K562 (cell line): ENCODE measurements at regions of chr4 and their contacts with region 1.

Region 1: GRCh38 chr4:150209140-150209829 is 131.0 kb downstream of the DCLK2 start:
- DNase-seq: peak; percentile 51 to 59 (median 57)
- ATAC-seq: peak; percentile 97
- H3K4me3 ChIP-seq: no peak overlapping the region
- H3K27ac ChIP-seq: no peak overlapping the region
- H3K4me1 ChIP-seq: no peaks in the 10 kb centered on the region
- H3K27me3 ChIP-seq: peaks cover 0 to 6% of the 10 kb centered on the region in 2 experiments; a peak in 2 of 5 replicates
- CTCF ChIP-seq: peak; percentile 65 to 71 (median 70)
- EP300 ChIP-seq: no peak
- POLR2A ChIP-seq: no peak
- RAD21 ChIP-seq: peak; percentile 25 to 66

Region 2: DNA sequence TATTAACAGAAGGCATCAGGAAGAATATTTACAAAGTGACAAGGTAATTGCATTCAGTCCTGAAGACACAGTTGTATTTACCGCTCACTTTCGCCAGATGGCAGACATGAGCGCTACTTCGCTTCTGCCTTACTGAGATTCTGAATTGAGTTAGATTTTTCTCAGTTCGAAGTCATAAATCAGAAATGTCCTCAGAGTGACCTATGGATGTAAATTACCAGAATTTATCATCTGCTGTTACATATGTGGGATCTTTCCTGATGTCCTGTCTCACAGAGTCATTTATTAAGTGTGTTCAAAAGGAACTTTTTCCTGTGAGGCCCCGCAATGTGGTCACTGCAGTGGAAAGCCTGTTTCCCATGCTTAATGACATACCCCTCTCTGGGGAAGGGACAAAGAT is 228.3 kb before region 1 on chr4:
- CTCF ChIA-PET with region 1: interaction called, 14 read pairs
- POLR2A ChIA-PET with region 1: no interaction called
- in situ Hi-C with region 1: loop called (anchors 25 kb)
- intact Hi-C with region 1: loop called (anchors 1 kb)
- DNase-seq: peak; percentile 36 to 61 (median 44)
- ATAC-seq: peak; percentile 84
- H3K4me3 ChIP-seq: no peak overlapping the region
- H3K27ac ChIP-seq: no peak overlapping the region
- H3K4me1 ChIP-seq: no peaks in the 10 kb centered on the region; a peak in 1 of 5 replicates
- H3K27me3 ChIP-seq: no peaks in the 10 kb centered on the region
- CTCF ChIP-seq: peak; percentile 62 to 75 (median 67); a peak in 5 of 6 replicates
- EP300 ChIP-seq: no peak
- POLR2A ChIP-seq: no peak
- RAD21 ChIP-seq: peak; percentile 58 to 67

Region 3: DNA sequence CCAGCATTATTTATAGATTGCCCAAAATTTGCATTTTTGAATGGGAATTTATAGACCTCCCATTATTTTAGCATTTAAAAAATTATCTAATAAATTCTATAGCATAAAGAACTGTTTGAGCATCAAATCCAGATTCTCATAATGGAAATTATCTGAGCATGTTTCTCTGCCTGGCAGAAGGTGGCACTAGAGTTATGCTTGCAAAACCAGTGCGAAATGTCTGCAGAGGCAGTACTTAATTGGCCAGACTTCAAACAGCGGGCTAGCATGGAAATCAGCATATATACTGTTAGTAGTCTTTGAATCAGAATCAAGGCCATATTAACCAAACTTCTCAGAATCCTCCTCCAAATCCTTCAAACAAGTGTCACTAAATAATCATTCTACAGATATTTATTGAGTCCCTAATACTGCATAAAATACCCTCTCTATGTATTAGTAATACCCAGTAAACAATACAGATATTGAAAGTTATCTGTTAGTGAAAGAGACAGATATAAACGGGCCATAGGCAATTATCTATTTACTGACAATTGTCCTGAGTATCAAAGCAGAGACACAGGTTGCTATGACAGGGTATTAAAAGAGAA is 209.7 kb before region 1 on chr4:
- CTCF ChIA-PET with region 1: interaction called, 3 read pairs
- POLR2A ChIA-PET with region 1: no interaction called
- in situ Hi-C with region 1: loop called (anchors 25 kb)
- intact Hi-C with region 1: loop called (anchors 1 kb)
- DNase-seq: peak in 2 of 4 experiments; percentile 10 to 17
- ATAC-seq: peak; percentile 54; the same call in 1 of the 3 replicates
- H3K4me3 ChIP-seq: no peak overlapping the region
- H3K27ac ChIP-seq: no peak overlapping the region
- H3K4me1 ChIP-seq: peaks cover 0 to 8% of the 10 kb centered on the region in 2 experiments; a peak in 1 of 5 replicates
- H3K27me3 ChIP-seq: no peaks in the 10 kb centered on the region
- CTCF ChIP-seq: peak; percentile 40 to 59 (median 47)
- EP300 ChIP-seq: no peak
- POLR2A ChIP-seq: no peak
- RAD21 ChIP-seq: peak in 1 of 2 experiments; percentile 48; a peak in 2 of 4 replicates

Region 4: DNA sequence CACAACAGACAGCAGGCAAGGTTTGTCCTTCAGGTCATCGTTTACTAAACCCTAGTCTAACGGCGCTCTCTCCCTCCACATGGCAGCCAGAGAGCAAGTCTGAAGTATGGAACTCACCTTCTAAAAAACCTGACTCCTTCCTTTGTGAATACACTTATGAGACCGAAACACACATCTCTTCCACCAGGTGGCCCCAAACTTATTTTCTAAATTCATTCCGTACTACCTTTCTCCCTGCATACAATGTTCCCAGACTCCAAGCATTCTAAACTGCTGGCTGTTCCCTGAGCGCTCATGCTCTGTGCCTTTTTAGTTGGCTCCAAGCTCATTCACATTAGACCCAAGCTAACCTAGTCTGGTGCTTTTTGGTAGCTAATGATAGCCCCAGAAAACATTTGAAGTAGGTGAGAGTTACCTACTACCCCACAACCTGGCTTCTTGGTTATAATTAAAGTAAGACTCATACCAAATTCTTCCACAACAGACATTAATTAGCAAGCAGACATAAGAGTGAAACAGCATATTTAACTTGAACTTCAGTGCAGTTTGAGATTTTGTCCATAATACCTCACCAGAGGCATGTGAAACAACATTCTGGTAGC is 198.7 kb before region 1 on chr4:
- CTCF ChIA-PET with region 1: no interaction called
- POLR2A ChIA-PET with region 1: no interaction called
- in situ Hi-C with region 1: no loop called
- intact Hi-C with region 1: loop called (anchors 5 kb)
- DNase-seq: peak; percentile 12 to 41 (median 18)
- ATAC-seq: peak; percentile 87
- H3K4me3 ChIP-seq: no peak overlapping the region
- H3K27ac ChIP-seq: no peak overlapping the region
- H3K4me1 ChIP-seq: no peaks in the 10 kb centered on the region
- H3K27me3 ChIP-seq: no peaks in the 10 kb centered on the region
- CTCF ChIP-seq: peak; percentile 28 to 49 (median 47); a peak in 4 of 6 replicates
- EP300 ChIP-seq: no peak
- POLR2A ChIP-seq: no peak
- RAD21 ChIP-seq: peak in 1 of 2 experiments; percentile 43; a peak in 2 of 4 replicates

Region 5: GRCh38 chr4:150337734-150338133 is 128.4 kb after region 1 on chr4:
- CTCF ChIA-PET with region 1: no interaction called
- POLR2A ChIA-PET with region 1: no interaction called
- in situ Hi-C with region 1: no loop called
- intact Hi-C with region 1: no loop called
- DNase-seq: no peak
- ATAC-seq: peak; percentile 64
- H3K4me3 ChIP-seq: no peak overlapping the region
- H3K27ac ChIP-seq: no peak overlapping the region
- H3K4me1 ChIP-seq: peaks cover 0 to 5% of the 10 kb centered on the region in 2 experiments; a peak in 1 of 5 replicates
- H3K27me3 ChIP-seq: no peaks in the 10 kb centered on the region
- CTCF ChIP-seq: no peak; a peak in 1 of 6 replicates
- EP300 ChIP-seq: no peak
- POLR2A ChIP-seq: no peak
- RAD21 ChIP-seq: peak in 1 of 2 experiments; percentile 48; a peak in 3 of 4 replicates